Heart left ventricle (tissue), 16 donors: ENCODE measurements at regions of chr12 and their contacts with region 1.

Region 1: DNA sequence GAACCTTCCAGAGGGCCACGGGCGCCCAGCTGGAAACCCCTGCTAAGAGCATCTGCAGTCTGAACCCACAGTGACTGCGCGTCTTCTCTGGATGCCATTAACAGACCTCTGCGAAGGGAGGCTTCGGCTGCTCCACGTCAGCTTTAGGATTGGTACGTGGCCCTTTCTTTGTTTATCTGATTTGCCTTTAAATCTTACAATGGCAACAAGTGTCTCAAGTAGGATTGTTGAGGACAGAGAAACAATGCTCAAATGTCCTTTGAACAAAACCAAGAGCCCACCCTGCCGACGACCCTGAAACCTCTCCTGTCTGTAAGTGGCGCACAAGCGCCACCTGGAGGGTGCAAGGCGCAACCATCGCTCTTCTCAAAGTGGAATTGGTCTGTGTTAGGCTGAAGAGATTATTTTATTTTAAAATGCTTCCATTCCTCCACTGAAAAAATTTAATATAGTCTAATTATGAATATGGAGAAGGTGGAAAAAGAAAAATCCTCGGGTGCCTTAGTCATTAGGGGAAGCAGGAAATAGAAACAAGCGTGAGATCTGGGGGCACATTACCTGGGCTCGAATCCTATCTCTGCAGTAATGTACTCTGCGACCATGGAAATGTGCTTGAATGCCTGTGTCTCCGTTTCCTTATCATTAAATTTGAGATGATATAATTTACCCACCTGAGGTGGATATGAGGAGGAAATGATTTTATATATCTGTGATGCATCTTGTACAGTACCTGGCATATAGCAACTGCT is 82.6 kb upstream of the PTPRB start:
- DNase-seq: peak; percentile 33 to 65 (median 41)
- ATAC-seq: peak in 3 of 4 donors; percentile 68 to 78 (median 74)
- H3K4me3 ChIP-seq: peak overlapping the region in 10 of 12 donors; percentile 2 to 52 (median 38)
- H3K27ac ChIP-seq: peak overlapping the region; percentile 6 to 74 (median 48)
- H3K4me1 ChIP-seq: peaks cover 0 to 41% (median 7%) of the 10 kb centered on the region in 12 donors
- H3K27me3 ChIP-seq: peaks cover 0 to 8% (median 0%) of the 10 kb centered on the region in 9 donors
- CTCF ChIP-seq: peak; percentile 80 to 97 (median 92)
- POLR2A ChIP-seq: no peak

Region 2: GRCh38 chr12:69879041-69879960 is 840.5 kb before region 1 on chr12:
- intact Hi-C with region 1: loop called in 4 of 10 experiments (anchors 2 to 10 kb)
- DNase-seq: peak in 4 of 5 donors; percentile 61 to 76 (median 68)
- ATAC-seq: peak; percentile 58 to 95 (median 94)
- H3K4me3 ChIP-seq: peak overlapping the region in 7 of 12 donors; percentile 19 to 37 (median 26)
- H3K27ac ChIP-seq: no peak overlapping the region
- H3K4me1 ChIP-seq: peaks cover 0 to 9% (median 0%) of the 10 kb centered on the region in 12 donors
- H3K27me3 ChIP-seq: no peaks in the 10 kb centered on the region
- CTCF ChIP-seq: peak; percentile 77 to 94 (median 88)
- POLR2A ChIP-seq: no peak

Region 3: DNA sequence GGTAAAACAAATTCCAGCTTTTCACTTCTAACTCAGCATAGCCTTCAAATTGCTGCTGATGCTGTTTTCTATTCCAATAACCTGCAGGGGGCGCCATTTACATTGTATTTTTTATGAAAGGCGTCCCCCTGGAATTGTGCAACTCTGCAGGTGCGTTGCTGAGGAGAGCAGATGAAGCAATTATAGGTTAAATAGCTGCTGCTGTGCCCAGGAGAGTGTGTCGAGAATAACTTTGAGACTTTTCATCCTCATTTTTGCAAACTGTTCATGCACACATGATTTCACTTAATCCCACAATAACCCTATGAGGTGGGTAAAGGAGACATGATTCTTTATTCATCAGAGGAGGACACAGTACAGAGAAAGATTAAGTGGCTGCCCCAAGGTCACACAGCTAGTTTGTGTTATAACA is 819.1 kb before region 1 on chr12:
- intact Hi-C with region 1: loop called in 2 of 10 experiments (anchors 5 to 10 kb)
- DNase-seq: peak in 4 of 5 donors; percentile 61 to 81 (median 68)
- ATAC-seq: peak in 3 of 4 donors; percentile 49 to 65 (median 58)
- H3K4me3 ChIP-seq: no peak overlapping the region
- H3K27ac ChIP-seq: peak overlapping the region in 2 of 12 donors; percentile 2 to 25
- H3K4me1 ChIP-seq: peaks cover 0 to 32% (median 9%) of the 10 kb centered on the region in 12 donors
- H3K27me3 ChIP-seq: no peaks in the 10 kb centered on the region
- CTCF ChIP-seq: peak; percentile 78 to 93 (median 86)
- POLR2A ChIP-seq: no peak

Region 4: DNA sequence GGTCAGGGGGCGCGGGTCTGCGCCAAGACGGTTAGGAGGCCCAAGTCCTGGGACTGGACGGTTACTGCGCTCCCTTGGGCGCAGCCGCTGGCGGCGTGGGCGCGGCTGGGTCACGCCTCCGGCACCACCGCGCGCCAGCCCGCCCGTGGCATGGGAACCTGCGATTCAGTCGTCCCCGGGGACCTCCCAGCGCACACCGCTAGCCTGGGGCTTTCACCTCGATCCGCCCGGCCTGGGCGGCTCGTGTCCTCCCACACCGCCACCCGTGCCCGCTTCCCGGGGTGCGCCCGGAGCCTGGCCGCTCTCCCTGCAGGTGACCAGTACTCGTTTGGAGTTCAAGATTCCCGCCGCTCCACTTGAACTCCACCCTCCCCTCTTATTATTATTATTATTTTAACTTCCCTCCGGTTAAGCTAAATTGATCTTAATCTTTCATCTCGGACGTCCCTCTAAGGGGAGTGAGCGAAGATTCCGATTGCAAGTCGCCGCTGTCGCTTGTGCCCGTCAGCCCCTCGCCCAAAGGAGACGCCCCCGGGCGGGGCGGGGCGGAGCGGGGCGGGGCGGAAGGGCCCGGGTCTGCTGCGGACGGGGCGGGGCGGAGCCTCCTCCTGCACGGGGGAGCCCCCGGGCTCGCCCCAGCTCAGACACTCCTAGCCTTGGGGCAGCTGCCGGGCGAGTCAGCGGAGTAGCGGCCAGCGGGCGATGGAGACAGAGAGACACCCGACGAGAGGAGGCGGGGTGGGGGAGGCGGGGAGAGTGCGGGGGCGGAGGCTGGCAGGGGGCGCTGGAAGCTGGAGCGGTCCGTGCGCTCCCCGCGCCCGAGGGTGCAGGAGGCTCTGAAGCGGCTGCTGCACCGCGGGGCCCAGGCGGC is 354.0 kb before region 1 on chr12 and contains the start of gene KCNMB4:
- intact Hi-C with region 1: loop called in 1 of 10 experiments (anchors 10 kb)
- DNase-seq: peak; percentile 66 to 79 (median 70)
- ATAC-seq: peak; percentile 57 to 96 (median 86)
- H3K4me3 ChIP-seq: peak within 1 kb of the TSS; percentile 39 to 87 (median 74)
- H3K27ac ChIP-seq: peak within 1 kb of the TSS in 9 of 12 donors; percentile 8 to 58 (median 48)
- H3K4me1 ChIP-seq: peaks cover 0 to 30% (median 10%) of the 10 kb centered on the region in 12 donors
- H3K27me3 ChIP-seq: peaks cover 0 to 21% (median 0%) of the 10 kb centered on the region in 9 donors
- CTCF ChIP-seq: no peak
- POLR2A ChIP-seq: no peak
- total RNA-seq, gene KCNMB4: 0.96 to 3.6 (median 2.1) TPM

Region 5: GRCh38 chr12:70535896-70536374 is 183.9 kb before region 1 on chr12:
- intact Hi-C with region 1: loop called in 1 of 10 experiments (anchors 5 kb)
- DNase-seq: peak in 2 of 5 donors; percentile 26 to 43
- ATAC-seq: peak; percentile 62 to 88 (median 72)
- H3K4me3 ChIP-seq: no peak overlapping the region
- H3K27ac ChIP-seq: peak overlapping the region; percentile 10 to 87 (median 70)
- H3K4me1 ChIP-seq: peaks cover 0 to 19% (median 5%) of the 10 kb centered on the region in 12 donors
- H3K27me3 ChIP-seq: no peaks in the 10 kb centered on the region
- CTCF ChIP-seq: no peak
- POLR2A ChIP-seq: no peak

Region 6: GRCh38 chr12:70584301-70584700 is 135.5 kb before region 1 on chr12:
- intact Hi-C with region 1: loop called in 3 of 10 experiments (anchors 2 kb)
- DNase-seq: no peak
- ATAC-seq: no peak
- H3K4me3 ChIP-seq: no peak overlapping the region
- H3K27ac ChIP-seq: no peak overlapping the region
- H3K4me1 ChIP-seq: no peaks in the 10 kb centered on the region
- H3K27me3 ChIP-seq: no peaks in the 10 kb centered on the region
- CTCF ChIP-seq: no peak
- POLR2A ChIP-seq: no peak

Region 7: DNA sequence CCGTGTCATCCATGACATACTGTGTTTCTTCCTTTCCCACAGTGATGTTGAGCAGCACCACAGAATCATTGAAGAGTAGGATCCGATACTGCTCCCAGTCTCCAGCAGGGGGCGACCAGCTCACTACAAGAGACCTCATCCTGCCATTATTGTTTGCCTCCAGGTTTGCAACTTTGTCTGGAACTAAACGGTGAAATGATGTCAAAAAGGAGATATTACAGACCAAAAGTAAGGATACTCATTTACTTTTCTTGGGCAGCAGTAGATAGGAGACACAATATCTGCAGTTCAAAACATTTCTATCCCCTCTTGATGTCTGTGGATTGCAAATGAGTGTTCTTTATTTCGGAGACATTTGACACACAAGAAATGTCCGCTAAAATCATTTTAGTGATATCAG is 129.8 kb before region 1 on chr12:
- intact Hi-C with region 1: loop called (anchors 2 to 5 kb)
- DNase-seq: peak; percentile 63 to 77 (median 66)
- ATAC-seq: peak; percentile 64 to 82 (median 76)
- H3K4me3 ChIP-seq: no peak overlapping the region
- H3K27ac ChIP-seq: no peak overlapping the region
- H3K4me1 ChIP-seq: peaks cover 0 to 15% (median 0%) of the 10 kb centered on the region in 12 donors
- H3K27me3 ChIP-seq: no peaks in the 10 kb centered on the region
- CTCF ChIP-seq: peak; percentile 71 to 93 (median 82)
- POLR2A ChIP-seq: no peak